Tibial artery (tissue), 4 donors: ENCODE measurements at regions of chr17 and their contacts with region 1.

Region 1: DNA sequence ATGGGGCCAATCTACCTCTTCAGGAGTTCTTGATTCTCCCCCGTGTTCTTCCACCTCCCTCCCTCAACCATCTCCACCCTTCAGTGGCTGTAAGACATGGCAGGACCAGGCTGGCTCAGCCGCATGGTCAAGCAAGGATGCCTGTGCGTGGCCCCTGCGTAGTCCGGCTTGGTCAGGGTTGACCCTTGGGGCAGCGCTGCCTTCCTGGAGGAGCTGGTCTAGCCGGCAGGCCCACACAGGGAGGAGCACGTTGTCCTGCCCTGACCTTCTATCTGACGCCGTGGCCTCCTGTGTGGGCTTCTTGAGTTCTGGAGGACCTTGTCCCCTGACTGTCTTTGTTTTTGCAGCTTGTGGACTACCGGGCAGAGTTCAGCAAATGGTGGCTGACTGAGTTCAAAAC is 169.8 kb downstream of the DNAH9 start:
- DNase-seq: no peak
- H3K4me3 ChIP-seq: no peak overlapping the region
- H3K27ac ChIP-seq: no peak overlapping the region
- H3K4me1 ChIP-seq: no peaks in the 10 kb centered on the region
- H3K27me3 ChIP-seq: no peaks in the 10 kb centered on the region
- CTCF ChIP-seq: no peak

Region 2: GRCh38 chr17:11719856-11720255 is 48.2 kb before region 1 on chr17:
- intact Hi-C with region 1: loop called (anchors 10 kb)
- DNase-seq: no peak
- H3K4me3 ChIP-seq: no peak overlapping the region
- H3K27ac ChIP-seq: no peak overlapping the region
- H3K4me1 ChIP-seq: no peaks in the 10 kb centered on the region
- H3K27me3 ChIP-seq: no peaks in the 10 kb centered on the region
- CTCF ChIP-seq: no peak

Region 3: DNA sequence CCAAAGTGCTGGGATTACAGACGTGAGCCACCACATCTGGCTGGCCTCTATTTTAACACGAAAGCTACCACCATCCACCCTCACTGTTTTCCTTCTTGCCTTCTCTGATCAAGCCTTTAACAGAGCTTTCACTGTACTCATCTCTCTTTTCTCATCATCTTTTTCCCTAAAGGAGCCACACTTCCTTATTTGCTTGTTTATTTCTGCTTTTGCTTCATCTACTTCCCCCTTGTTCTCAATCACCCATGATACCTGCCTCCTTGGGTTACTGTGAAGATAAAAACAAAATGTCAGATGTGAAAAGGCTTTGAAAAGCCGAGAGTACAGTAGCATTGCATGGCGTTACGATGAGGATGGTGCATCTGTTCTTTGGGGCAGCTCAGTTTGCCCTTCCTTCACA is 149.3 kb after region 1 on chr17:
- intact Hi-C with region 1: no loop called
- DNase-seq: no peak
- H3K4me3 ChIP-seq: no peak overlapping the region
- H3K27ac ChIP-seq: no peak overlapping the region
- H3K4me1 ChIP-seq: no peaks in the 10 kb centered on the region
- H3K27me3 ChIP-seq: no peaks in the 10 kb centered on the region
- CTCF ChIP-seq: no peak

Region 4: GRCh38 chr17:12877953-12878669 is 1110.0 kb after region 1 on chr17:
- intact Hi-C with region 1: loop called (anchors 5 kb)
- DNase-seq: no peak
- H3K4me3 ChIP-seq: no peak overlapping the region
- H3K27ac ChIP-seq: no peak overlapping the region
- H3K4me1 ChIP-seq: no peaks in the 10 kb centered on the region
- H3K27me3 ChIP-seq: no peaks in the 10 kb centered on the region
- CTCF ChIP-seq: no peak